ENCODE measurements at regions of chr12 and their contacts with region 1.

Region 1: DNA sequence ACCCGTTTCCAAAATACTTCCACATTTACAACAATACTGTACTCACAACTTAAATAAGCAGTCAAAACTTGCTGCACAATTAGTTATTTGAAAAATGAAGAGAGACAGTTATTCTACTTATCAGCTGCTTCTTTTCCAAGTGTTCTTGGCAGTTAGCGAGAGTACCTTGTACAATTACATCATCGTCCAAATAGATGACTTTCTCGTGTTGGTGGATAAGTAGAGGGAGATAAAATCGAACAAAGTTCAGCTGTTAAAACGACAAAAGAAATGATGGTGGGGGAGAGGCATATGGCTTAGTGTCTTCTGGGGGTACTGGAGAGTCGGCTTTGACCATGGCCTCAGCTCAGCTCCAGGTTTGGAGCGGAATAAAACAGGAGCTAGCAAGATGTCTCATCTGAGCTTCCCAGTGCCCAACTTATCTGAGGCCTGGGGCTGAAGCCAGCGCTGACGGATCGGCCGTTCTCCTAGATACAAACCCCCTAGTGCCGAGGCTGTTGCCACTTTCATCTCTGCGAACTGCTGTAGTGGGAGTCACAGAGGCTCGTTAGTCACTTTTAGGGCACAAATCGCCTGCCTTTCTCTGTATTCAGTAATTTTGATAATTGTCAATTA is 31.7 kb downstream of the TDG start:
- DNase-seq: peak; percentile 48 to 54
- ATAC-seq: peak; percentile 70 to 92 (median 81)
- H3K4me3 ChIP-seq: peak overlapping the region in 5 of 10 donors; percentile 1 to 19 (median 17)
- H3K27ac ChIP-seq: peak overlapping the region in 8 of 10 donors; percentile 27 to 76 (median 62)
- H3K4me1 ChIP-seq: peaks cover 0 to 21% (median 0%) of the 10 kb centered on the region in 9 donors
- H3K27me3 ChIP-seq: peaks cover 0 to 4% (median 0%) of the 10 kb centered on the region in 7 donors
- CTCF ChIP-seq: no peak

Region 2: GRCh38 chr12:103956516-103957027 is 40.8 kb before region 1 on chr12:
- intact Hi-C with region 1: loop called in 1 of 10 experiments (anchors 1 kb)
- DNase-seq: no peak
- ATAC-seq: peak; percentile 35 to 79 (median 55)
- H3K4me3 ChIP-seq: peak overlapping the region; percentile 68 to 97 (median 88)
- H3K27ac ChIP-seq: peak overlapping the region; percentile 86 to 97 (median 95)
- H3K4me1 ChIP-seq: peaks cover 3 to 36% (median 21%) of the 10 kb centered on the region in 9 donors
- H3K27me3 ChIP-seq: no peaks in the 10 kb centered on the region
- CTCF ChIP-seq: no peak

Region 3: DNA sequence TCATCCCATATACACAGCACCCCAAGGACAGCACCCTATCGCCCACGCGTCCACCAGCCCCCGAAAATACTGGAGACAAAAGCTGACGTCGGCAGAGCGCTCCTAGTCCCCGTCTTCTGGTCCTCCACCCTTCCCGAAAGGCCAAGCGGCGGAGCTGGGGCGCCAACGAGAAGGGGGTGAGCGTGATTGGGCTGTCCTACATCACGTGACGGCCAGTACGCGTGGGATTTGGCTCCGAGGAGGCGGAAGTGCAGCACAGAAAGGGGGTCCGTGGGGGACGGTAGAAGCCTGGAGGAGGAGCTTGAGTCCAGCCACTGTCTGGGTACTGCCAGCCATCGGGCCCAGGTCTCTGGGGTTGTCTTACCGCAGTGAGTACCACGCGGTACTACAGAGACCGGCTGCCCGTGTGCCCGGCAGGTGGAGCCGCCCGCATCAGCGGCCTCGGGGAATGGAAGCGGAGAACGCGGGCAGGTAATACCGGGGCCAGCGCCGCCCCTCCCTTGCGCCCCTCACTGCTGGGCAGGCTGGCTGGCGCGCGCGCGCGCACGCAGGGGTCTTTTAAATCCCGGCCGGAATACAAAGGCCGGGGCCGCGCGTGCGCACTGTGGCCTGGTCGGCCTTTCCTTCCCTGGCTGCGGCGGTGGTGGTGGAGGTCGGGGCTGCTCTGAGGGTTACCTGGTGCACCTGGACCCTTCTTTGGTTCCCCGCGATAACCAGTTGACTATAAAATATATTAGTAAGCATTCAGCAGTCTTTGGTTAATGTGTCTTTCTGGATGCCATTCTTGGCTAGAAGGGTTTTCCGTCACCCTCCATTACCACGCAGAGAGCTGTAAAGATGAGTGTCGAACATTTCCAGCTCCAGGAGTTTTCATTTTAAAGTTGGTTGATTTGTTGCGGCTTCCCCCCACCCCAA is 31.5 kb before region 1 on chr12 and contains the start of gene TDG:
- intact Hi-C with region 1: loop called in 1 of 10 experiments (anchors 1 kb)
- DNase-seq: peak; percentile 97 to 99
- ATAC-seq: peak; percentile 98 to 99 (median 99)
- H3K4me3 ChIP-seq: peak within 1 kb of the TSS; percentile 60 to 99 (median 90)
- H3K27ac ChIP-seq: peak within 1 kb of the TSS; percentile 82 to 99 (median 97)
- H3K4me1 ChIP-seq: peaks cover 3 to 69% (median 56%) of the 10 kb centered on the region in 9 donors
- H3K27me3 ChIP-seq: no peaks in the 10 kb centered on the region
- CTCF ChIP-seq: peak in 7 of 9 donors; percentile 5 to 49 (median 18)
- total RNA-seq, gene TDG: 8.7 to 17.4 (median 11.7) TPM

Region 4: GRCh38 chr12:104057771-104058197 is 60.4 kb after region 1 on chr12:
- intact Hi-C with region 1: loop called in 4 of 10 experiments (anchors 5 to 10 kb)
- DNase-seq: no peak
- ATAC-seq: no peak
- H3K4me3 ChIP-seq: no peak overlapping the region
- H3K27ac ChIP-seq: no peak overlapping the region
- H3K4me1 ChIP-seq: peaks cover 0 to 20% (median 8%) of the 10 kb centered on the region in 9 donors
- H3K27me3 ChIP-seq: no peaks in the 10 kb centered on the region
- CTCF ChIP-seq: peak in 8 of 9 donors; percentile 11 to 63 (median 54)

Region 5: GRCh38 chr12:104064031-104064822 is 66.8 kb after region 1 on chr12 and contains the start of gene HCFC2:
- intact Hi-C with region 1: loop called in 4 of 10 experiments (anchors 5 to 10 kb)
- DNase-seq: peak; percentile 94
- ATAC-seq: peak; percentile 99
- H3K4me3 ChIP-seq: peak within 1 kb of the TSS; percentile 67 to 98 (median 93)
- H3K27ac ChIP-seq: peak within 1 kb of the TSS; percentile 75 to 97 (median 94)
- H3K4me1 ChIP-seq: peaks cover 0 to 41% (median 29%) of the 10 kb centered on the region in 9 donors
- H3K27me3 ChIP-seq: no peaks in the 10 kb centered on the region
- CTCF ChIP-seq: peak in 1 of 9 donors; percentile 15
- total RNA-seq, gene HCFC2: 8.6 to 13.6 (median 11.3) TPM